ENCODE measurements at regions of chr3 and their contacts with region 1.

Region 1: GRCh38 chr3:33360136-33360825 is 79.9 kb downstream of the UBP1 start:
- DNase-seq: peak; percentile 95
- ATAC-seq: peak; percentile 89
- H3K4me3 ChIP-seq: peak overlapping the region; percentile 55
- H3K27ac ChIP-seq: peak overlapping the region; percentile 97
- H3K4me1 ChIP-seq: peaks cover 69% of the 10 kb centered on the region
- H3K27me3 ChIP-seq: no peaks in the 10 kb centered on the region
- CTCF ChIP-seq: no peak

Region 2: DNA sequence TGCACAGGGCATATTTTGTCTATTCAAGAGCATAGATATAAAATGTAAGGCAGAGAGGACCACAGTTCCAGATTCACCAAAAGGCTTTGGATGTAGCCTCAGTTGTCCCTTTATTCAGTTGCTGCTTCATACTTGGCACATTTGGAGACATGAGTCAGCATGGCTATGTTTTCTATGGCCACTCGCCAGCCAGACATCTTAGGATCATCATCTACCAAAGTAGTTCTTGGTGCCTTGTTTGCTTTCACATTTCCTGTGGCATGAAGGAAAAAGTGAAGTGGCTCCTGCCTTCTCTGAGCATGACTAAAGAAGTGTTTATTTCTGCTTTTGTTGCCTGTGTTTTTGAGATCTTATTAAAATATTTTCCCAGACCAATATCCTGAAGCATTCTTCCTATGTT is 148.8 kb before region 1 on chr3:
- CTCF ChIA-PET with region 1: no interaction called
- POLR2A ChIA-PET with region 1: no interaction called
- intact Hi-C with region 1: loop called (anchors 2 kb)
- DNase-seq: peak; percentile 95
- ATAC-seq: peak; percentile 95
- H3K4me3 ChIP-seq: no peak overlapping the region
- H3K27ac ChIP-seq: peak overlapping the region; percentile 14
- H3K4me1 ChIP-seq: peaks cover 16% of the 10 kb centered on the region
- H3K27me3 ChIP-seq: peaks cover under 1% of the 10 kb centered on the region; the same call in 1 of the 2 replicates
- CTCF ChIP-seq: no peak

Region 3: DNA sequence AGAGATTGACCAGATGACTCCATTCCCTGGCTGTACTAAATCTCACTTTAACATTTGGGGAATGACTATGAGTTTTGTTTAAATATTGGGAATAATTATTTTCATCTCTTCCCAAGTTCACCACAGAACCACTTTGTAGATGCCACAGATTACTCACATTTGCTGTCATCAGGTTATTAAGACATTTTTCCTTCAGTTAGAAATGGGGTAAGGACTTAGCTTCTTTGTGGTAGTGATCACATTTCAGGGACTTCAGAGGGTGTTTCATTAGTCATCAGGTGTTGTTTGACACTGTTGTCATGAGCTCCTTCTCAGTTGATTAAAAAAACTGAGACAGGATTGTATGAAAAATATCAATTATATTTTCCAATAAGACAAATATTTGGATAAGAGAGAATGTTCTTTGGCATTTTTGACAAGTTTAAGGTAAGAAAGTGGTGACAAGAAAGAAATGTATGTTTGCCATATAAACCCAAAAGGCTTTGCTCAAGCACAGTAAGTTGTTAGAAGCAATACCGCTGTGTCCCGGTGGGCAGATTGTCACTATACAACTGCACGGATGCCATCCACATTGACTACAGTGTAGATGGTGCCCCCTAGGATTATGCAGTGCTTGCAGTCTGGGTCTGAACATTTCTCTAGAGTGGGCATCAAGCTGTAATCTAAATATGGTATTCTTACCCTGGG is 60.7 kb before region 1 on chr3:
- CTCF ChIA-PET with region 1: interaction called, 3 read pairs
- POLR2A ChIA-PET with region 1: interaction called, 10 read pairs
- intact Hi-C with region 1: loop called (anchors 1 kb)
- DNase-seq: peak; percentile 80
- ATAC-seq: peak; percentile 71
- H3K4me3 ChIP-seq: no peak overlapping the region
- H3K27ac ChIP-seq: peak overlapping the region; percentile 80
- H3K4me1 ChIP-seq: peaks cover 17% of the 10 kb centered on the region
- H3K27me3 ChIP-seq: no peaks in the 10 kb centered on the region
- CTCF ChIP-seq: no peak

Region 4: DNA sequence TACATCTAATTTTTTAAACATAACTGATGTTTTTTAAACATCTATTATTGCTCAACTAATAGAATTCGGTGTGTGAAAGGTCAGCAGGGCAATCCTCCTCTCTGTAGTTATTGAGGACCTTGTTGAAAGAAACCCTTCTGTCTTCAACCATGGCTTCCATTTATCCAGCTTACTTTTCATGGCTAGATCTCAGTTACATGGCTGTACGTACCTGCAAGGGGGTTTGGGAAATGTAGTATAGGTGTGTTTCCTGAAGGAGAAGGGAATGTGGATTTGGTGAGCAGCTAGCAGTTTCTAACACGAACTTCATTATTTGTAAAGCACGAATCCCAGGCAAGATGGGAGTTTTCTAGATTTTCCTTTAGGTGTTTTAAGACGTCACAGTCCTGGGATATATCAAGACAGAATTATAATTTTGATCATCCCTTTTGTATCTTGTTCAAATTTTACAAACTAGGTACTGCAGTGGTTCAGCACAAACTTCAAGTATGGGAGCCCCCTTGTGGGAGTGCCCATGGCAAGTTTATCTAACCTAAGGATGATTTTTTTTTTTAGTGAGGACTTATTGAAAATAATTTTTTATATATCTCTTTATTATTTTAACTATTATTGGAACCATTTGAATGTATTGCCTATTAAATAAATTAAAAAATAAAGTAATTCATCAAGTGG is 41.4 kb before region 1 on chr3:
- CTCF ChIA-PET with region 1: interaction called, 3 read pairs
- POLR2A ChIA-PET with region 1: no interaction called
- intact Hi-C with region 1: loop called (anchors 5 kb)
- DNase-seq: peak; percentile 26
- ATAC-seq: peak; percentile 31; the same call in 1 of the 2 replicates
- H3K4me3 ChIP-seq: no peak overlapping the region
- H3K27ac ChIP-seq: no peak overlapping the region
- H3K4me1 ChIP-seq: peaks cover 38% of the 10 kb centered on the region
- H3K27me3 ChIP-seq: no peaks in the 10 kb centered on the region
- CTCF ChIP-seq: peak; percentile 37

Region 5: GRCh38 chr3:33385423-33385822 is 25.1 kb after region 1 on chr3:
- CTCF ChIA-PET with region 1: no interaction called
- POLR2A ChIA-PET with region 1: no interaction called
- intact Hi-C with region 1: no loop called
- DNase-seq: no peak
- ATAC-seq: no peak
- H3K4me3 ChIP-seq: no peak overlapping the region
- H3K27ac ChIP-seq: no peak overlapping the region
- H3K4me1 ChIP-seq: peaks cover 12% of the 10 kb centered on the region
- H3K27me3 ChIP-seq: no peaks in the 10 kb centered on the region
- CTCF ChIP-seq: no peak

Measured in PC-3 (cell line).